ENCODE measurements at regions of chr1 and their contacts with region 1.

Region 1: GRCh38 chr1:9784508-9785133 is 39.1 kb downstream of the CLSTN1 start:
- DNase-seq: peak; percentile 70 to 75 (median 72)
- H3K4me3 ChIP-seq: no peak overlapping the region
- H3K4me3 Mint-ChIP-seq: peak overlapping the region in 2 of 8 donors; percentile 29 to 61
- H3K27ac ChIP-seq: no peak overlapping the region
- H3K27ac Mint-ChIP-seq: peak overlapping the region in 5 of 7 donors; percentile 18 to 64 (median 42)
- H3K4me1 ChIP-seq: peaks cover 38% of the 10 kb centered on the region
- H3K4me1 Mint-ChIP-seq: peaks cover 22 to 42% (median 27%) of the 10 kb centered on the region in 4 donors
- H3K27me3 ChIP-seq: no peaks in the 10 kb centered on the region
- H3K27me3 Mint-ChIP-seq: no peaks in the 10 kb centered on the region

Region 2: DNA sequence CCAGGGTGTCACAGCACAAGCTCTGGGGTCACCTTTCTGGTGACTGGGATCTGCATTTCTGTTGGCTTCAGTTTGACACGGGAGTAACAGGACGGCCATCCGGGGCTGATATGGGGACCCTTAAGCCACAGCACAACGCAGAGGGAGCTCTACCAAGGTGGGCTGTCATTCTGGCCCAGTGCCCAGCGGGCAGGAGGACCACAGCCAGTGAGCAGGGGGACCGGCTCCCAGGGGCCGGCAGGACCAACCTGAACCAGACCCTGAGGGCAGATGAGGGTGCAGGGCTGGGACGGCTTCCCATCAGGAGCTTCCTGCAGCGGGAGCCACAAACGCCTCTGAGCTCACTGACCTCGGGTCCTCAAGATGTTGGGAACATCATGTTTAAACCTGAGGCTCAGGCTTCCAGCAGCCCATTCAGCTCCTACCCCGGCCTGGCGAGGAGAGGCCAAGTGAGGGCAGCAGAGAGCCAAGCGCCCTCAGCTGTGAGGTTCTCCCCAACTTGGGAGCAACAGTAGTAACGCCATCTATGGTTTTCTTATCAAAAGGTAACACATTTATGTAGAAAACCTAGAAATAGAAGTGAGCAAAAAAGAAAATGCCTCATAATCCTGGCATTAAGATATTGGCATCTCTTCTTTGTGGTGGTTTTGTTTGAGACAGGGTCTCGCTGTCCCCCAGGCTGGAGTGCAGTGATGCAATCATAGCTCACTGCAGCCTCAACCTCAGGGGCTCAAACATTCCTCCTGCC is 169.1 kb before region 1 on chr1:
- CTCF ChIA-PET with region 1: interaction called, 18 read pairs
- POLR2A ChIA-PET with region 1: no interaction called
- intact Hi-C with region 1: loop called (anchors 1 kb)
- DNase-seq: peak in 4 of 5 donors; percentile 42 to 51 (median 50)
- H3K4me3 ChIP-seq: no peak overlapping the region
- H3K4me3 Mint-ChIP-seq: no peak overlapping the region
- H3K27ac ChIP-seq: no peak overlapping the region
- H3K27ac Mint-ChIP-seq: no peak overlapping the region
- H3K4me1 ChIP-seq: peaks cover 6% of the 10 kb centered on the region
- H3K4me1 Mint-ChIP-seq: no peaks in the 10 kb centered on the region
- H3K27me3 ChIP-seq: no peaks in the 10 kb centered on the region
- H3K27me3 Mint-ChIP-seq: peaks cover 0 to 5% of the 10 kb centered on the region in 2 donors

Region 3: GRCh38 chr1:9749361-9749760 is 35.3 kb before region 1 on chr1:
- CTCF ChIA-PET with region 1: no interaction called
- POLR2A ChIA-PET with region 1: no interaction called
- intact Hi-C with region 1: no loop called
- DNase-seq: no peak
- H3K4me3 ChIP-seq: no peak overlapping the region
- H3K4me3 Mint-ChIP-seq: no peak overlapping the region
- H3K27ac ChIP-seq: no peak overlapping the region
- H3K27ac Mint-ChIP-seq: peak overlapping the region in 3 of 7 donors; percentile 27 to 52 (median 37)
- H3K4me1 ChIP-seq: no peaks in the 10 kb centered on the region
- H3K4me1 Mint-ChIP-seq: peaks cover 0 to 3% (median 0%) of the 10 kb centered on the region in 4 donors
- H3K27me3 ChIP-seq: no peaks in the 10 kb centered on the region
- H3K27me3 Mint-ChIP-seq: no peaks in the 10 kb centered on the region

Region 4: DNA sequence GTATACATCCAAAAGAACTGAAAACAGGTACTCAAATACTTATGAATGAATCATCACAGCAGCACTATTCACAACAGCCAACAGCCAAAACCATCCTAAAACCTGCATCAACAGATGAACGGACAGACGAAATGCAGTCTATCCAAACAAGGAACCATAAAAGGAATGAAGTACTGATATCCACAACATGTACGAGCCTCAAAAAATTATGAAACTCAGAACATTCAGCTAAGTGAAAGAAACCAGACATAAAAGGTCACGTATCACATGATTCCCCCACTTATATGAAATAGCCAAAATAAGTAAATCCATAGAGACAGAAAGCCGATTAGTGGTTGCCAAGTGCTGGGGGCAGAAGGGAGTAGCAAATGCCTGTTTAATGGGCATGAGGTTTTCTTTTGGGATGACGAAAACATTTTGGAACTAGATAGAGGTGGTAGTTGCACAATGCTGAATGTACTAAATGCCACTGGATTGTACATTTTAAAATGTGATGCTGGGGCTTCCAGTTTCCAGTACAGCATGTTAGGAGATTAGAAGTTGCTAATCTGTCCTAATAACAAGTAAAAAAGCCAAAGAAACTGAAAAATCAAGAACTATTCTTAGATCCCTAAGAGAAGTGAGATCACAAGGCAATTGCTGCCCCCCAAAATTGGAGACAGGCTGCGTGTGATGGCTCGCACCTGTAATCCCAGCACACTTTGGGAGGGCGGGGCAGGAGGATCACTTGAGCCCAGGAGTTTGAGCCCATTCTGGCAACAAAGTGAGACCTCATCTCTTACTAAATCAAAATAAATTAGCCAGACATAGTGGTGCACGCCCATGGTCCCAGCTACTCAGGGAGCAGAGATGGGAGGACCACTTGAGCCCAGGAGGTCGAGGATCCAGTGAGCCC is 13.9 kb after region 1 on chr1:
- CTCF ChIA-PET with region 1: interaction called, 44 read pairs
- POLR2A ChIA-PET with region 1: interaction called, 5 read pairs
- intact Hi-C with region 1: no loop called
- DNase-seq: no peak
- H3K4me3 ChIP-seq: no peak overlapping the region
- H3K4me3 Mint-ChIP-seq: peak overlapping the region in 6 of 8 donors; percentile 26 to 62 (median 36)
- H3K27ac ChIP-seq: no peak overlapping the region
- H3K27ac Mint-ChIP-seq: peak overlapping the region; percentile 26 to 90 (median 77)
- H3K4me1 ChIP-seq: peaks cover 59% of the 10 kb centered on the region
- H3K4me1 Mint-ChIP-seq: peaks cover 39 to 86% (median 61%) of the 10 kb centered on the region in 4 donors
- H3K27me3 ChIP-seq: no peaks in the 10 kb centered on the region
- H3K27me3 Mint-ChIP-seq: no peaks in the 10 kb centered on the region

Region 5: GRCh38 chr1:9823943-9824701 is 39.5 kb after region 1 on chr1 and contains the start of gene CLSTN1:
- CTCF ChIA-PET with region 1: interaction called, 34 read pairs
- POLR2A ChIA-PET with region 1: no interaction called
- intact Hi-C with region 1: loop called (anchors 1 kb)
- DNase-seq: peak; percentile 85 to 92 (median 86)
- H3K4me3 ChIP-seq: peak within 1 kb of the TSS; percentile 73 to 76
- H3K4me3 Mint-ChIP-seq: peak within 1 kb of the TSS; percentile 94 to 99 (median 97)
- H3K27ac ChIP-seq: peak within 1 kb of the TSS; percentile 55
- H3K27ac Mint-ChIP-seq: peak within 1 kb of the TSS; percentile 90 to 97 (median 96)
- H3K4me1 ChIP-seq: peaks cover 55% of the 10 kb centered on the region
- H3K4me1 Mint-ChIP-seq: peaks cover 25 to 68% (median 41%) of the 10 kb centered on the region in 4 donors
- H3K27me3 ChIP-seq: no peaks in the 10 kb centered on the region
- H3K27me3 Mint-ChIP-seq: no peaks in the 10 kb centered on the region
- total RNA-seq, gene CLSTN1: 107 to 109 TPM

Region 6: DNA sequence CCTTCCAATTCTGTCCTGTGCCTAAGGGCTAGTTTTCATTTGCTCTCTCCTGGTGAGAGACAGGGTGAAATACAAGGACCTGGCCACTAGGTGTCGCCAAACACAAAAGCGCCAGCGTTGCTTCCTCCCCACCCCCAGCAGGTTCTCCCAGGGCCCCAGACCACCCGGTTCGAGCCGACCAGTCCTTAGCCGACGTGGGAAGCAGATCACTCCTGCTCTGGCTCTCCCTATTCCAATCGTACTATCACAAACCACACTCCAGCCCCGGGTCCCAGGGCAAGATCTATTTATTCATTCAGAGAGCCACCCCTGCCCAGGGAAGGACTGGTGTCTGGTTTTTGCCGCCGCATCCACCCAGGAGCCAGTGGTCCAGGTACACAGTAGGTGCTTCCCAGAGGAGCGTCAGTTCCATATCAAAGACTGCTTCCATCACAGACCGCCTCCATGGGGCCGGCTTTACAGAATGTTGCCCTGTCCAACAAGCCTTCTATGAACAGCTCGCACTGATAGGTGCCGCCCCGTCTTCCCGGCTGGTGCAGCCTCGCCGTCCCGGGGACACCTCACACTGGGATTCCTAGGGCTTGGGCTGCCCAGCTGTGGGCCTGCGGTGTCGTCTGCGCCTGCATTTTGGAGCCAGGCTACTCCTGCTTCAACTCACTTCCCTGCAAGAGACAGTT is 90.5 kb after region 1 on chr1:
- CTCF ChIA-PET with region 1: interaction called, 381 read pairs
- POLR2A ChIA-PET with region 1: interaction called, 3 read pairs
- intact Hi-C with region 1: no loop called
- DNase-seq: peak; percentile 65 to 72 (median 66)
- H3K4me3 ChIP-seq: no peak overlapping the region
- H3K4me3 Mint-ChIP-seq: peak overlapping the region in 1 of 8 donors; percentile 31
- H3K27ac ChIP-seq: no peak overlapping the region
- H3K27ac Mint-ChIP-seq: peak overlapping the region in 4 of 7 donors; percentile 18 to 36 (median 32)
- H3K4me1 ChIP-seq: no peaks in the 10 kb centered on the region
- H3K4me1 Mint-ChIP-seq: peaks cover 0 to 5% (median 3%) of the 10 kb centered on the region in 4 donors
- H3K27me3 ChIP-seq: no peaks in the 10 kb centered on the region
- H3K27me3 Mint-ChIP-seq: no peaks in the 10 kb centered on the region

Measured in CD4-positive, alpha-beta memory T cell (primary cell).